ENCODE measurements at regions of chr14 and their contacts with region 1.

Region 1: GRCh38 chr14:21263656-21264411 is 5.4 kb downstream of the HNRNPC start:
- DNase-seq: no peak
- H3K4me3 Mint-ChIP-seq: peak overlapping the region; percentile 99
- H3K27ac Mint-ChIP-seq: peak overlapping the region; percentile 96
- H3K4me1 Mint-ChIP-seq: peaks cover 61% of the 10 kb centered on the region
- H3K27me3 Mint-ChIP-seq: no peaks in the 10 kb centered on the region

Region 2: GRCh38 chr14:21215130-21215878 is 48.5 kb before region 1 on chr14:
- intact Hi-C with region 1: loop called (anchors 1 kb)
- DNase-seq: no peak
- H3K4me3 Mint-ChIP-seq: peak overlapping the region; percentile 51
- H3K27ac Mint-ChIP-seq: peak overlapping the region; percentile 78
- H3K4me1 Mint-ChIP-seq: peaks cover 43% of the 10 kb centered on the region
- H3K27me3 Mint-ChIP-seq: no peaks in the 10 kb centered on the region

Region 3: DNA sequence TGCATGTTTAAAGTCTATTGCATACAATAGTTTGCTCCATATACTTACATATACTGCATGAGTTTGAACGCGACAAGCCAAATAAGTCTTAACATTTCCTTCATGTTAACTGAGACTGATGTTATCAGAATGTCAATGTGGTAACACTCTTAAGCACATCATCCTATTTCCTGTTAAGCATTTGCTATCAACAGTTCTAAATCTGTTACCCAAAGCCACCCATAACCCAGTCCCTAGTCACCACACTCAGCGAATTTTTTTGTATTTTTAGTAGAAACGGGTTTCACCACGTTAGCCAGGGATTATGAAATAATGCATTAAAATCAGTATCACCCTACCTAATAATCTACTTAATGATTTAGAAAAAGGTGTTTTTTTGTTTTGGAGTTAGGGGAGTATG is 34.0 kb before region 1 on chr14:
- intact Hi-C with region 1: loop called (anchors 1 kb)
- DNase-seq: no peak
- H3K4me3 Mint-ChIP-seq: peak overlapping the region; percentile 69
- H3K27ac Mint-ChIP-seq: peak overlapping the region; percentile 96
- H3K4me1 Mint-ChIP-seq: peaks cover 66% of the 10 kb centered on the region
- H3K27me3 Mint-ChIP-seq: no peaks in the 10 kb centered on the region

Region 4: DNA sequence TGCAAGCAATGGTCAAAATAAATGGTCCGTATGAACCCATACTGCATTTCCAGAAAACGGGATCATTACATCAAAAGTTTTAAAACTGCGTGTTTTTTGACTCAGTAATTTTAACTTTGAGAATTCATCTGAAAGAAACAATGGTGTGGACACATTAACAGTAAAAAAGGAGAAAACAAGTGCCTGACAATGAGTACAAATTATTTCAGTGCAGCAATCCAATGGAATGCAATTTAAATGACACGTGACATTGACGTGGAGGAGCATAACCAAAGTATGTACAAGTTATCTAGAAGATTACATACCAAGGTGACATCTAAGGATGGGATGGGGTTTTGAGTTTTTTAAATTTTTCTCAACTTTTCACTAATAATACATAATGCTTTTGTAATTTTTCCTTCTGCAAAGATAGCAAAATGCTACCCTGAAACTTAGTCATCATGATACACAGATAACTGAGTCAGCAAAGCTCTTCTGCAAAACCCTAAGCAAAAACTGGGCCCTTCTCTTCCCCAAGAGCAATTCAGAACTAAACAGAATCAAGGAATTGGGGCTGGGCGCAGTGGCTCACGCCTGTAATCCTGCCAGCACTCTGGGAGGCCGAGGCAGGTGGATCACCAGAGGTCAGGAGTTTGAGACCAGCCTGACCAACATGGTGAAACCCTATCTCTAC is 15.0 kb before region 1 on chr14:
- intact Hi-C with region 1: loop called (anchors 2 kb)
- DNase-seq: no peak
- H3K4me3 Mint-ChIP-seq: no peak overlapping the region
- H3K27ac Mint-ChIP-seq: no peak overlapping the region
- H3K4me1 Mint-ChIP-seq: peaks cover 29% of the 10 kb centered on the region
- H3K27me3 Mint-ChIP-seq: no peaks in the 10 kb centered on the region

Region 5: DNA sequence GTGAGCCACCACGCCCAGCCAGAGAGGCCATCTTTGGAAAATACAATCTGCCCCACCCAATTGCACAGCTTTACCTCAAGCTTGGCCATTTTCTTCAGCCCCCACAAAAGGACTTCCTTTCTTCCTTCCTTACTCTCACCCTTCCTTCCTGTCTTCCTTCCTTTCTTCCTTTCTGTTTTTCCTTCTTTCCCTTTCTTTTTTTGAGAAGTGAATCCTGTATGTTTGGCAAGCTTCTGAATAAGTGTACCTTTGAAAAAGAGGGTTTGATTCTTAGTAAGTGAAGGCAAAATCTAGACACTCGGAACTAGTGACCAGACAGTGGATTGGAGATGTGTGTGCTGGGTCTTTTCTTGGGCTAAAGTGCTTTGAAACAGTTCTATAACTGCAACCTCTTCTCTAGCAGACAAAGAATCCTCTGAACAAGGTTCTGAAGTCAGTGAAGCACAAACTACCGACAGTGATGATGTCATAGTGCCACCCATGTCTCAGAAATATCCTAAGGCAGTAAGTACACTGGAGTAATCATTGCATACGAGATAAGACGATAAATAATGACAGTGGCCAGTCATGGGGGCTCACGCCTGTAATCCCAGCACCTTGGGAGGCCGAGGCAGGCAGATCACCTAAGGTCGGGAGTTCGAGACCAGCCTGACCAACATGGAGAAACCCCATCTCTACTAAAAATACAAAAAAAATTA is 70.5 kb after region 1 on chr14:
- intact Hi-C with region 1: no loop called
- DNase-seq: no peak
- H3K4me3 Mint-ChIP-seq: no peak overlapping the region
- H3K27ac Mint-ChIP-seq: no peak overlapping the region
- H3K4me1 Mint-ChIP-seq: no peaks in the 10 kb centered on the region
- H3K27me3 Mint-ChIP-seq: peaks cover 10% of the 10 kb centered on the region

Region 6: GRCh38 chr14:21408147-21408546 is 144.3 kb after region 1 on chr14:
- intact Hi-C with region 1: no loop called
- DNase-seq: no peak
- H3K4me3 Mint-ChIP-seq: no peak overlapping the region
- H3K27ac Mint-ChIP-seq: no peak overlapping the region
- H3K4me1 Mint-ChIP-seq: peaks cover 6% of the 10 kb centered on the region
- H3K27me3 Mint-ChIP-seq: no peaks in the 10 kb centered on the region